ENCODE measurements at regions of chr15 and their contacts with region 1.

Region 1: GRCh38 chr15:83011271-83012075 is at the start of gene C15orf40:
- DNase-seq: peak; percentile 82 to 94
- ATAC-seq: peak; percentile 86 to 96 (median 92)
- H3K4me3 ChIP-seq: peak within 1 kb of the TSS; percentile 89
- H3K4me3 Mint-ChIP-seq: peak within 1 kb of the TSS; percentile 93
- H3K27ac ChIP-seq: peak within 1 kb of the TSS; percentile 75
- H3K27ac Mint-ChIP-seq: peak within 1 kb of the TSS; percentile 85 to 90
- H3K4me1 ChIP-seq: peaks cover 23% of the 10 kb centered on the region
- H3K4me1 Mint-ChIP-seq: peaks cover 52% of the 10 kb centered on the region in 2 donors
- H3K27me3 ChIP-seq: no peaks in the 10 kb centered on the region
- H3K27me3 Mint-ChIP-seq: no peaks in the 10 kb centered on the region
- CTCF ChIP-seq: no peak
- total RNA-seq, gene C15orf40: 12.5 to 16.0 (median 15.1) TPM

Region 2: DNA sequence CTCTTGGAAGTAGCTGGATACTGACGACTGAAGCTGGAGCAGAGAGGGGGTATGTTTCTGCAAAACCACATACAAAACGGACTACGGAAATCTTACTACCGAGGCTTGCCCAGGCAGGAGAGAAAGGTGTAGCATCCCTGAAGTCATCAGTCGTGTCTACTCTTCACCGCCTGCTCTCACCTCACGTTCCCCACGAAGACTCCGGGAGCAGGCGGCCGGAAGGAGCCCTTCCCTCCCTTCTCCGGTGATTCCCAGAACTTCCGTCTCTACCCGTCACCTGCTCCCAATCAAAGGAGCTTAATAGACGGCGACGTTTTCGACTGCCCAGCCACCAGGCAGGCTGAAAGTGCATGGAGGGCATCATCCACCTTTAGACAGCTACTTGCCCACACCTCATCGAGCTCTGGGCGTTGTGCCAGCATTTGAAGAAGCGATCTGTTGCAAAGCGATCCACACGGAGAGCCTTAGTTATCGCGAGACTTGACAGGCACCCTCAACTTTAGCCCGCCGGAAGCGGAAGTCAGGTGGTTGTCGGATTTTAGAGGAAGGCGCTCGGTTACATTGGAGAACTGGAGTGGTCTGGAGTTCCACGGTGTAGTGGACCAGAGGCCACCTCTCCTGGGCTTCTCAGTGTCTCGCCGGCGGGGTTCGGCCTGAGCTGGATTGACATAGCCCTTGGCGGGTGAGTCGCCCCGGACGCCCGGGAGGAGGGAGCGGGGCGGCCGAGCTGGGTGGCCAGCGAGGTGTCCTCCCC is 25.6 kb before region 1 on chr15 and contains the start of gene RAMAC:
- intact Hi-C with region 1: loop called (anchors 1 kb)
- DNase-seq: peak; percentile 84 to 98
- ATAC-seq: peak; percentile 91 to 95 (median 94)
- H3K4me3 ChIP-seq: peak within 1 kb of the TSS; percentile 94
- H3K4me3 Mint-ChIP-seq: peak within 1 kb of the TSS; percentile 97
- H3K27ac ChIP-seq: peak within 1 kb of the TSS; percentile 72
- H3K27ac Mint-ChIP-seq: peak within 1 kb of the TSS; percentile 90 to 94
- H3K4me1 ChIP-seq: peaks cover 15% of the 10 kb centered on the region
- H3K4me1 Mint-ChIP-seq: peaks cover 22 to 30% of the 10 kb centered on the region in 2 donors
- H3K27me3 ChIP-seq: no peaks in the 10 kb centered on the region
- H3K27me3 Mint-ChIP-seq: no peaks in the 10 kb centered on the region
- CTCF ChIP-seq: no peak
- total RNA-seq, gene RAMAC: 15.4 to 27.2 (median 25.7) TPM

Region 3: GRCh38 chr15:83108266-83109226 is 97.1 kb after region 1 on chr15:
- intact Hi-C with region 1: loop called (anchors 5 kb)
- DNase-seq: peak; percentile 32 to 35
- ATAC-seq: peak; percentile 82 to 90 (median 87)
- H3K4me3 ChIP-seq: peak overlapping the region; percentile 47
- H3K4me3 Mint-ChIP-seq: peak overlapping the region; percentile 97
- H3K27ac ChIP-seq: peak overlapping the region; percentile 68
- H3K27ac Mint-ChIP-seq: peak overlapping the region; percentile 69 to 96
- H3K4me1 ChIP-seq: peaks cover 25% of the 10 kb centered on the region
- H3K4me1 Mint-ChIP-seq: peaks cover 26 to 41% of the 10 kb centered on the region in 2 donors
- H3K27me3 ChIP-seq: no peaks in the 10 kb centered on the region
- H3K27me3 Mint-ChIP-seq: peaks cover 0 to 8% of the 10 kb centered on the region in 2 donors
- CTCF ChIP-seq: no peak

Region 4: DNA sequence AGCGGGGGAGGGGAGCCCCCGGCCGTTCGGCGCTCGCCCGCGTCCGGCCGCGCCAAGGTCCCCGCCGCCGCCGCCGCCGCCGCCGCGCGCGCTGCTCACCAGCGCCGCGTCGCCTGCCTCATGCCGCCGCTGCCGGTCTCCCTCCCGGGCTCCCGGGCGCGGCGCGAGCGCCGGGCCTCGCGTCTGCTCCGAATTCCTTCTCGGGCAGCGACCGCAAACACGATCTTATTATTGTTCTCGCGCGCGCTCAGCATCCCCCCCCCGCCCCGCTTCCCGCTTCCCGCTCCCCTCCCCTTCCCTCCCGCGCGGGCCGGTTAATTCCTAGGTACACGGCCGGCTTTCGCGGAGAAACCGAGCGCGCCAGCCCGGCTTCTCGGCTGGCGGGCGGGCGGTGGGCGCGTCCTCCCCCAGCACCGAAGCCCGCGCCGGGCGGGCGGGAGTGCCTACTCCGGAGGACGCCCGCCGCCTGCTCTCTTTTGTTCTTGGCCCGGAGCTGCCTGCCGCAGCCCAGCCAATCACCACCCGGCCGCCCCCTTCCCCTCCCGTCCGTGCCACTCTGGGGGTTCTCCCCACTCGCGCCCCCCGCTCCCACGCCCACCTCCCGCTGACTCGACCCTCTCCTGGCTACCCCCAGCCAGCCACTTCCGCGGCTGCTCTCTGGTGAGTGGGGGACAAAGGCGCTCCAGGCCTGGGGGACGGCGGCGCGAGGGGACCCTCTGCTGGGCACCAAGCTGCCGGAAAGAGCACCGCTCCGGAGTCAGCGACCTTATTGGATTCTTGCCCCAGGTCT is 196.3 kb after region 1 on chr15 and contains the start of gene HDGFL3:
- intact Hi-C with region 1: loop called (anchors 10 kb)
- DNase-seq: peak; percentile 39 to 43
- ATAC-seq: peak; percentile 47 to 65 (median 58)
- H3K4me3 ChIP-seq: peak within 1 kb of the TSS; percentile 58
- H3K4me3 Mint-ChIP-seq: peak within 1 kb of the TSS; percentile 92
- H3K27ac ChIP-seq: peak within 1 kb of the TSS; percentile 33
- H3K27ac Mint-ChIP-seq: peak within 1 kb of the TSS; percentile 79 to 83
- H3K4me1 ChIP-seq: peaks cover 10% of the 10 kb centered on the region
- H3K4me1 Mint-ChIP-seq: peaks cover 9% of the 10 kb centered on the region in 2 donors
- H3K27me3 ChIP-seq: no peaks in the 10 kb centered on the region
- H3K27me3 Mint-ChIP-seq: peaks cover 0 to 3% of the 10 kb centered on the region in 2 donors
- CTCF ChIP-seq: no peak
- total RNA-seq, gene HDGFL3: 13.0 to 25.3 (median 21.4) TPM

Region 5: DNA sequence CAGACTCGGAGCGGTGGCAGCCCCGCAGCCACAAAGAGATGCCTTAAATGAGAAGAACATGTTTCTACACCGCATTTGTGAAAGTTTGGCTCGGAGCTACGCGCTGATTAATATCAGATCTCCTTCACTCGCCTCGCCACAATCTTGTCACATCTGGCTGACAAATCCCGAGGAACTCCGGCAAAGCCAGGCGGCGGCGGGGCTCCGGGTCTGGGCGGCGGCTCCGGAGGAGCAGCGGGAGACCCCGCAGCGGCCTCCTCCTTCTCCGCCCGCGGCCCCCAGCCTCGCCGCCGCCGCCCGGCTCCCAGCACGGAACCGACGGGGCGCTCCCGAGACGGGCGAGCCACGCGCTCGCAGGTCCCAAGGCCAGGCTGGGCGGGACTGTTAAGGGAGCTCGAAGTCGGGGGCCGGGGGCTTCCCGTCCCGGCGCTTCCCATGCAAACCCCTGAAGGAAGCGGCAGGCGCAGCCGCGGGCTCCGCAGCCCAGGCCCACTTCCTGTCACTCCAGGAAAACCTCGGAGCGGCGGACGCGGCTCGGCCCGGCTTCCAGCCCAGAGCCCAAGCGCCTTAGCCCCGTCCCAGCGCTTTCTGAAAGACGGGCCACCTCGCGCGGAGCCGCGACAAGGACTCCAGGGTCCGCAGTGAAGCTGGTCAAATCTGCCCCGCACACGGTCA is 271.8 kb after region 1 on chr15:
- intact Hi-C with region 1: no loop called
- DNase-seq: no peak
- ATAC-seq: no peak
- H3K4me3 ChIP-seq: no peak overlapping the region
- H3K4me3 Mint-ChIP-seq: peak overlapping the region; percentile 78
- H3K27ac ChIP-seq: no peak overlapping the region
- H3K27ac Mint-ChIP-seq: no peak overlapping the region
- H3K4me1 ChIP-seq: peaks cover 7% of the 10 kb centered on the region
- H3K4me1 Mint-ChIP-seq: peaks cover 0 to 10% of the 10 kb centered on the region in 2 donors
- H3K27me3 ChIP-seq: peaks cover 33% of the 10 kb centered on the region
- H3K27me3 Mint-ChIP-seq: peaks cover 53 to 83% of the 10 kb centered on the region in 2 donors
- CTCF ChIP-seq: no peak